ENCODE measurements at regions of chr11 and their contacts with region 1.

Region 1: GRCh38 chr11:68383976-68384501 is 71.6 kb downstream of the LRP5 start:
- DNase-seq: peak; percentile 40
- ATAC-seq: peak; percentile 21
- H3K4me3 ChIP-seq: no peak overlapping the region
- H3K27ac ChIP-seq: no peak overlapping the region
- H3K4me1 ChIP-seq: peaks cover 20% of the 10 kb centered on the region
- H3K27me3 ChIP-seq: no peaks in the 10 kb centered on the region
- CTCF ChIP-seq: peak; percentile 88
- POLR2A ChIP-seq: no peak
- RAD21 ChIP-seq: peak; percentile 88

Region 2: GRCh38 chr11:68206187-68206601 is 177.8 kb before region 1 on chr11:
- CTCF ChIA-PET with region 1: no interaction called
- POLR2A ChIA-PET with region 1: no interaction called
- dilution Hi-C with region 1: no loop called
- in situ Hi-C with region 1: no loop called
- intact Hi-C with region 1: loop called (anchors 5 kb)
- DNase-seq: peak; percentile 69
- ATAC-seq: peak; percentile 73
- H3K4me3 ChIP-seq: no peak overlapping the region
- H3K27ac ChIP-seq: no peak overlapping the region
- H3K4me1 ChIP-seq: peaks cover 8% of the 10 kb centered on the region
- H3K27me3 ChIP-seq: no peaks in the 10 kb centered on the region
- CTCF ChIP-seq: peak; percentile 79
- POLR2A ChIP-seq: no peak
- RAD21 ChIP-seq: peak; percentile 65

Region 3: GRCh38 chr11:68266121-68266891 is 117.7 kb before region 1 on chr11:
- CTCF ChIA-PET with region 1: interaction called, 3 read pairs
- POLR2A ChIA-PET with region 1: no interaction called
- dilution Hi-C with region 1: no loop called
- in situ Hi-C with region 1: loop called (anchors 5 kb)
- intact Hi-C with region 1: loop called (anchors 1 kb)
- DNase-seq: no peak
- ATAC-seq: no peak
- H3K4me3 ChIP-seq: no peak overlapping the region
- H3K27ac ChIP-seq: no peak overlapping the region
- H3K4me1 ChIP-seq: peaks cover 10% of the 10 kb centered on the region
- H3K27me3 ChIP-seq: no peaks in the 10 kb centered on the region
- CTCF ChIP-seq: no peak
- POLR2A ChIP-seq: no peak
- RAD21 ChIP-seq: no peak

Region 4: GRCh38 chr11:68297812-68298658 is 86.0 kb before region 1 on chr11:
- CTCF ChIA-PET with region 1: no interaction called
- POLR2A ChIA-PET with region 1: no interaction called
- dilution Hi-C with region 1: no loop called
- in situ Hi-C with region 1: no loop called
- intact Hi-C with region 1: loop called (anchors 1 kb)
- DNase-seq: peak; percentile 48
- ATAC-seq: peak; percentile 100
- H3K4me3 ChIP-seq: no peak overlapping the region
- H3K27ac ChIP-seq: no peak overlapping the region
- H3K4me1 ChIP-seq: peaks cover 2% of the 10 kb centered on the region
- H3K27me3 ChIP-seq: peaks cover 2% of the 10 kb centered on the region; the same call in 1 of the 2 replicates
- CTCF ChIP-seq: peak; percentile 97
- POLR2A ChIP-seq: no peak
- RAD21 ChIP-seq: peak; percentile 96

Region 5: DNA sequence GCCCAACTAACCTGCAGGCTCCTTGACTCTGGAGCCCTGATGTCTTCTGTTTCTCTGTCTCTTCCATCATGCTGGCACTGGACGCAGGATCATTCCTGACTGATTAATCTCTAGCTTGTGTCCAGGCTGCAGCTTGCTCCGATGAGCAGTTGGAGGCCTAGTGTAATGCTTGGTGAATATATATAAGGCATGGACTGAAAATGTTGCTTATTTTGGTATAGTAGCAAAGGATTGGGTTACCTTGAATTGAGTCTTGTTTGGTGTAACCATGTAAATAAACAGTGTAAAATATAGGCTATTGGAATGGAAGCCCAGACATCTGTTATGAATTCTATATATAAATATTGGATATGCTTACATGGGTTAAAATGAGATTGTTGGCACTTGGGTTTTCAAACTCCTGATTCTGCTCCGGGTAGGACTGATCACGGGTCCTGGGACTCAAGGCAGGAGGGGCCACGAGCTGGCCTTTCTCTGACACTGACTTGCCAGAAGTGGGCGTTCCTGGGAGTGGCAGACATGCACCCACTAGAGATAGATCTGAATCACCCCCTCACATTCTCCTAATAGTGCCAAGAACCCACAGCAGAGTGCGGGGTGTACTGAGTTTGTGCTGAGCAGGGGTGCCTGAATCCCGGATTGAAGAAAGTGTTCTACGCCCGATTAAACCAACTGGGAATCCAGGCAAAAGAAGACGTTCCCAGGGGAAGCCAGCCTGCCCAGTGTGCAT is 45.8 kb before region 1 on chr11:
- CTCF ChIA-PET with region 1: no interaction called
- POLR2A ChIA-PET with region 1: no interaction called
- dilution Hi-C with region 1: no loop called
- in situ Hi-C with region 1: no loop called
- intact Hi-C with region 1: loop called (anchors 5 kb)
- DNase-seq: peak; percentile 72
- ATAC-seq: peak; percentile 87
- H3K4me3 ChIP-seq: no peak overlapping the region
- H3K27ac ChIP-seq: peak overlapping the region; percentile 1; the same call in 1 of the 2 replicates
- H3K4me1 ChIP-seq: peaks cover 27% of the 10 kb centered on the region; the same call in 1 of the 2 replicates
- H3K27me3 ChIP-seq: no peaks in the 10 kb centered on the region
- CTCF ChIP-seq: no peak
- POLR2A ChIP-seq: no peak
- RAD21 ChIP-seq: no peak

Region 6: DNA sequence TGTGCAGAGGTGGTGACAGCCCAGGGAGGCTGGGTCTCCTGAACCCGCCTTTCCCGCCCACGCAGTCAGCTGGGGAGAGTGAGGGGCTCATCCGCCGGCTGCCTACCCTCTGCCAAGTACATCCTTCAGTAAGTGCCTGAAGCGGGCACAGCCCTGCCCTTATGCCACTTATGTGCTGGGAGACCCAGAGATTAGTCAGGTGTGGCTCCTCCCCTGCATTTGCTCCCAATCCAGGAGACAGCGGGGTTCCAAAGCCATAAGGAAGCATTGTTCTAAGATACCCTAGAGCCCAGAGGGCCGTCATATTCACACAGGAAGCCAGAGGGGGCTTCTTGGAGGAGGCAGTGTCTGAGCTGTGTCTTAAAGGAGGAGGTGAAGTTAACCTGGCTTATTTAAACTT is 70.7 kb after region 1 on chr11:
- CTCF ChIA-PET with region 1: no interaction called
- POLR2A ChIA-PET with region 1: no interaction called
- dilution Hi-C with region 1: no loop called
- in situ Hi-C with region 1: no loop called
- intact Hi-C with region 1: no loop called
- DNase-seq: no peak
- ATAC-seq: no peak
- H3K4me3 ChIP-seq: no peak overlapping the region
- H3K27ac ChIP-seq: no peak overlapping the region
- H3K4me1 ChIP-seq: no peaks in the 10 kb centered on the region
- H3K27me3 ChIP-seq: peaks cover 3% of the 10 kb centered on the region; the same call in 1 of the 2 replicates
- CTCF ChIP-seq: no peak
- POLR2A ChIP-seq: no peak
- RAD21 ChIP-seq: no peak